ENCODE measurements at regions of chr10 and their contacts with region 1.

Region 1: GRCh38 chr10:80487791-80488538 is 33.9 kb downstream of the TSPAN14 start:
- DNase-seq: peak; percentile 80
- H3K4me3 Mint-ChIP-seq: peak overlapping the region; percentile 59
- H3K27ac Mint-ChIP-seq: peak overlapping the region; percentile 89
- H3K4me1 Mint-ChIP-seq: peaks cover 99% of the 10 kb centered on the region
- H3K27me3 Mint-ChIP-seq: no peaks in the 10 kb centered on the region

Region 2: GRCh38 chr10:80078448-80079311 is 409.3 kb before region 1 on chr10 and contains the start of gene TMEM254:
- CTCF ChIA-PET with region 1: no interaction called
- POLR2A ChIA-PET with region 1: no interaction called
- intact Hi-C with region 1: loop called (anchors 10 kb)
- DNase-seq: peak; percentile 94
- H3K4me3 Mint-ChIP-seq: peak within 1 kb of the TSS; percentile 97
- H3K27ac Mint-ChIP-seq: peak within 1 kb of the TSS; percentile 89
- H3K4me1 Mint-ChIP-seq: peaks cover 37% of the 10 kb centered on the region
- H3K27me3 Mint-ChIP-seq: no peaks in the 10 kb centered on the region
- total RNA-seq, gene TMEM254: 11.6 to 12.3 TPM

Region 3: GRCh38 chr10:80453701-80454513 is 34.1 kb before region 1 on chr10 and contains the start of gene TSPAN14:
- CTCF ChIA-PET with region 1: interaction called, 7 read pairs
- POLR2A ChIA-PET with region 1: interaction called, 23 read pairs
- intact Hi-C with region 1: loop called (anchors 1 kb)
- DNase-seq: peak; percentile 81
- H3K4me3 Mint-ChIP-seq: peak within 1 kb of the TSS; percentile 91
- H3K27ac Mint-ChIP-seq: peak within 1 kb of the TSS; percentile 97
- H3K4me1 Mint-ChIP-seq: peaks cover 46% of the 10 kb centered on the region
- H3K27me3 Mint-ChIP-seq: no peaks in the 10 kb centered on the region
- total RNA-seq, gene TSPAN14: 48.9 to 51.8 TPM

Region 4: GRCh38 chr10:80459047-80459931 is 28.7 kb before region 1 on chr10:
- CTCF ChIA-PET with region 1: interaction called, 7 read pairs
- POLR2A ChIA-PET with region 1: interaction called, 27 read pairs
- intact Hi-C with region 1: loop called (anchors 1 kb)
- DNase-seq: peak; percentile 85
- H3K4me3 Mint-ChIP-seq: peak overlapping the region; percentile 77
- H3K27ac Mint-ChIP-seq: peak overlapping the region; percentile 97
- H3K4me1 Mint-ChIP-seq: peaks cover 84% of the 10 kb centered on the region
- H3K27me3 Mint-ChIP-seq: no peaks in the 10 kb centered on the region

Region 5: GRCh38 chr10:80472234-80473095 is 15.5 kb before region 1 on chr10:
- CTCF ChIA-PET with region 1: interaction called, 13 read pairs
- POLR2A ChIA-PET with region 1: interaction called, 21 read pairs
- intact Hi-C with region 1: loop called (anchors 1 kb)
- DNase-seq: peak; percentile 70
- H3K4me3 Mint-ChIP-seq: peak overlapping the region; percentile 27
- H3K27ac Mint-ChIP-seq: peak overlapping the region; percentile 99
- H3K4me1 Mint-ChIP-seq: peaks cover 88% of the 10 kb centered on the region
- H3K27me3 Mint-ChIP-seq: no peaks in the 10 kb centered on the region

Region 6: GRCh38 chr10:80498833-80499741 is 11.1 kb after region 1 on chr10:
- CTCF ChIA-PET with region 1: interaction called, 26 read pairs
- POLR2A ChIA-PET with region 1: interaction called, 36 read pairs
- intact Hi-C with region 1: loop called (anchors 1 kb)
- DNase-seq: peak; percentile 88
- H3K4me3 Mint-ChIP-seq: peak overlapping the region; percentile 40
- H3K27ac Mint-ChIP-seq: peak overlapping the region; percentile 93
- H3K4me1 Mint-ChIP-seq: peaks cover 97% of the 10 kb centered on the region
- H3K27me3 Mint-ChIP-seq: no peaks in the 10 kb centered on the region

Measured in activated CD4-positive, alpha-beta memory T cell treated with anti-CD3 and anti-CD28 coated beads for 36 hours (primary cell).